Activated T-helper 1 cell treated with anti-CD3 and anti-CD28 coated beads, Interleukin-12 subunit alpha, Interleukin-12 subunit beta, Interleukin-2, Interleukin-4 antibody, amounts not matched to agents 30 ng/mL and 10 ng/mL and 1 ng/mL, durations not matched to agents 14 hours and 24 hours and 36 hours (primary cell): ENCODE measurements at regions of chrX and their contacts with region 1.

Region 1: GRCh38 chrX:12901486-12901885 is 4.9 kb upstream of the TLR8 start:
- DNase-seq: peak; percentile 26
- H3K4me3 Mint-ChIP-seq: no peak overlapping the region
- H3K27ac Mint-ChIP-seq: no peak overlapping the region
- H3K4me1 Mint-ChIP-seq: peaks cover 18% of the 10 kb centered on the region
- H3K27me3 Mint-ChIP-seq: peaks cover 7% of the 10 kb centered on the region

Region 2: DNA sequence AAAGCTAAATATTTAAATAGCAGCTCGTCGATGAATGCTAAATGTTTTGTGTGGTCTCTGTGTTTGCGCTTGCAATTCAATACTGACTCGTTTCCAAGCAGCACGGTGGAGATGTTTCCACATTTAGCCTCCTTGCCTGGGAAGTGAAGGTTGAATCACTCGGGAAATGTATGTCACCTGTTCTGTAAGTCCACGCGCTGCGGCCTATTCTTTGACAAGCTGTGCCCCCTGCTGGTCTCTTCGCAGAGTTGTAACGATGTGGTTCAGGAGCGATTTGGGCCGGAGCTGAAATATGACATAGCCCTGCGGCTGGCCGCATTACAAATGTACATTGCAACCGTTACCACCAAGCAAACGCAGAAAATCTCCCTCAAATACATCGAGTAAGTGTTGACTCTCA is 199.9 kb before region 1 on chrX:
- intact Hi-C with region 1: loop called (anchors 1 kb)
- DNase-seq: peak; percentile 2
- H3K4me3 Mint-ChIP-seq: no peak overlapping the region
- H3K27ac Mint-ChIP-seq: no peak overlapping the region
- H3K4me1 Mint-ChIP-seq: peaks cover 4% of the 10 kb centered on the region
- H3K27me3 Mint-ChIP-seq: peaks cover 5% of the 10 kb centered on the region

Region 3: GRCh38 chrX:12814420-12814819 is 87.1 kb before region 1 on chrX:
- intact Hi-C with region 1: loop called (anchors 1 kb)
- DNase-seq: peak; percentile 32
- H3K4me3 Mint-ChIP-seq: no peak overlapping the region
- H3K27ac Mint-ChIP-seq: no peak overlapping the region
- H3K4me1 Mint-ChIP-seq: peaks cover 34% of the 10 kb centered on the region
- H3K27me3 Mint-ChIP-seq: no peaks in the 10 kb centered on the region

Region 4: DNA sequence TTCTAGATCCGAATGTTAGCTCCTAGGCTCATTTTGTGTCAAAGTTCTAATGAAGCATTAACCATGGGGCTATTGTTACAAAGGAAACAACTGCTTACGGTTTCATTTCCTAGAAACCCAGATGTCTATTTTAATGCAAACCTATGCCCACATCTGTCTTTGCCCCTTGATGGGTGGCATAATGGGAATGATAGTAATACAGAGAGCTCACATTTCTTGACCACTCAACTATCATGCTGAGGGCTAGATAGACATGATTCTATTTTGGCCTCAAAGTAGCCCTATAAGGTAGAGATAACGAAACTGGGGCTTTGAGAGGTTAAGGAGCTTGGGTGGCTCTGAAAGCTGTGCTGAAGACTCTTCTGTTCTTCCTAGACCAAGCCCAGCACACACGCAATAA is 32.7 kb before region 1 on chrX:
- intact Hi-C with region 1: no loop called
- DNase-seq: no peak
- H3K4me3 Mint-ChIP-seq: no peak overlapping the region
- H3K27ac Mint-ChIP-seq: no peak overlapping the region
- H3K4me1 Mint-ChIP-seq: peaks cover 11% of the 10 kb centered on the region
- H3K27me3 Mint-ChIP-seq: peaks cover 3% of the 10 kb centered on the region